ENCODE measurements at regions of chr12 and their contacts with region 1.

Region 1: DNA sequence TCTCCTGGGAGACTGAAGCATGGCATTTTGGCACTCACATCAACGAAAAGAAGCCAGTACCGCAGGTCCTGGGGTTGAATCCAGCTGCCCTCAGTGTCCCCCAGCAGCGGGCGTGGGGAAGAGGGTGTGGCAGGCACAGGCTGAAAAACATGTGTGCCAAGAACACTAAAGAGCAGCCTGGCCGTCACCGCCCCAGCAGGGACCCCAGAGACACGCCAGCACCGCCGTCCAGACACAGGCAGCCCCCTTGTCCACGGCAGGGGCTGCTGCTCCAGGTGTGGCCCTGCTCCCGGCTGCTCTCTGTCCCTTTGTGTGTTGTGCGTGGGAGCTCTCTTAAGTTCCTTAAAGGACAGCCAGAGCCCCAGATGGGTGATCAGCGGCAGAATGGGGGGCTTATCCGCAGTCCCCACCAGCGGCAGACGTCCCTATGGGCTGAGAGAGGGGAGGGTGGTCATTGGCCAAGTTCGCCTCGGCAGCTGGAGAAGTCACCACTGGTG is 556 bp downstream of the PHETA1 start:
- DNase-seq: peak in 2 of 35 experiments; percentile 1 to 13
- ATAC-seq: peak; percentile 16 to 31 (median 21)
- H3K4me3 ChIP-seq: peak overlapping the region; percentile 53 to 86
- H3K4me3 Mint-ChIP-seq: peak overlapping the region; percentile 77 to 83 (median 81)
- H3K27ac ChIP-seq: no peak overlapping the region
- H3K27ac Mint-ChIP-seq: no peak overlapping the region
- H3K4me1 ChIP-seq: peaks cover 6 to 25% of the 10 kb centered on the region in 2 experiments
- H3K4me1 Mint-ChIP-seq: peaks cover 24 to 28% (median 27%) of the 10 kb centered on the region in 3 donors
- H3K27me3 ChIP-seq: peaks cover 0 to 4% of the 10 kb centered on the region in 2 experiments
- H3K27me3 Mint-ChIP-seq: no peaks in the 10 kb centered on the region

Region 2: GRCh38 chr12:110937104-110937641 is 431.2 kb before region 1 on chr12:
- CTCF ChIA-PET with region 1: interaction called in 1 of 2 experiments, 16 read pairs
- POLR2A ChIA-PET with region 1: no interaction called
- DNase-seq: peak in 33 of 35 experiments; percentile 12 to 75 (median 42)
- ATAC-seq: peak in 3 of 4 experiments; percentile 40 to 56 (median 54)
- H3K4me3 ChIP-seq: no peak overlapping the region
- H3K4me3 Mint-ChIP-seq: peak overlapping the region in 1 of 3 donors; percentile 19
- H3K27ac ChIP-seq: no peak overlapping the region
- H3K27ac Mint-ChIP-seq: no peak overlapping the region
- H3K4me1 ChIP-seq: peaks cover 0 to 6% of the 10 kb centered on the region in 2 experiments
- H3K4me1 Mint-ChIP-seq: peaks cover 6 to 7% (median 6%) of the 10 kb centered on the region in 3 donors
- H3K27me3 ChIP-seq: peaks cover 0 to 32% of the 10 kb centered on the region in 2 experiments
- H3K27me3 Mint-ChIP-seq: peaks cover 22% of the 10 kb centered on the region in 2 donors

Region 3: DNA sequence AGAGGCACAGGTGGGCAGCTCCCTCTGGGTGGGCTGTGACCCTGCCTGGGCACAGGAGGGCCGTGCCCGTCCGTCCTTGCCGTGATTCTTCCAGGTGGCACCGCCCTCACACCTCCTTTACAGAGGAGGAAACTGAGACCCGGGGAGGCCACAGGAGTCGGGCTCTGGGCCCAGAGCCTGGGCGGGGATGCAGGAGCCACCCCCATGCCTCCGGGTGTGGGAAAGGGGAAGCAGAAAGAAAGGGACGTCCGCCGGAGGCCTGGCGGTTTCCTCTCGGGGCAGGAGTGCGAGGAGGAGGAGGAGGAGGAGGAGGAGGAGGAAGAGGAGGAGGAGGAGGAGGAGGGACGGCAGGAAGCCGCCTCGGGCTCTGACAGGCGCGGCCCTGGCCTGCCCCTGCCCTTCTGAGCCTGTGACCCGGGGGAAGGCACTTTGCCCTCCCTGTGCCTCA is 60.4 kb after region 1 on chr12:
- CTCF ChIA-PET with region 1: no interaction called
- POLR2A ChIA-PET with region 1: no interaction called
- DNase-seq: peak in 2 of 35 experiments; percentile 42 to 44
- ATAC-seq: peak in 1 of 4 experiments; percentile 4
- H3K4me3 ChIP-seq: peak overlapping the region in 1 of 2 donors; percentile 9
- H3K4me3 Mint-ChIP-seq: peak overlapping the region in 2 of 3 donors; percentile 51 to 90
- H3K27ac ChIP-seq: peak overlapping the region; percentile 100
- H3K27ac Mint-ChIP-seq: peak overlapping the region; percentile 96
- H3K4me1 ChIP-seq: peaks cover 62 to 100% of the 10 kb centered on the region in 2 experiments
- H3K4me1 Mint-ChIP-seq: peaks cover 82 to 93% (median 89%) of the 10 kb centered on the region in 3 donors
- H3K27me3 ChIP-seq: no peaks in the 10 kb centered on the region
- H3K27me3 Mint-ChIP-seq: no peaks in the 10 kb centered on the region

Region 4: GRCh38 chr12:111444925-111445725 is 76.8 kb after region 1 on chr12:
- CTCF ChIA-PET with region 1: no interaction called
- POLR2A ChIA-PET with region 1: no interaction called
- DNase-seq: peak in 34 of 35 experiments; percentile 60 to 92 (median 84)
- ATAC-seq: peak; percentile 88 to 97 (median 93)
- H3K4me3 ChIP-seq: peak overlapping the region in 1 of 2 donors; percentile 13
- H3K4me3 Mint-ChIP-seq: peak overlapping the region; percentile 31 to 64 (median 49)
- H3K27ac ChIP-seq: peak overlapping the region; percentile 89
- H3K27ac Mint-ChIP-seq: peak overlapping the region; percentile 89 to 96
- H3K4me1 ChIP-seq: peaks cover 16 to 69% of the 10 kb centered on the region in 2 experiments
- H3K4me1 Mint-ChIP-seq: peaks cover 65 to 95% (median 78%) of the 10 kb centered on the region in 3 donors
- H3K27me3 ChIP-seq: no peaks in the 10 kb centered on the region
- H3K27me3 Mint-ChIP-seq: no peaks in the 10 kb centered on the region

Measured in T-cell (primary cell).